Pancreas (tissue), 10 donors: ENCODE measurements at regions of chr22 and their contacts with region 1.

Region 1: DNA sequence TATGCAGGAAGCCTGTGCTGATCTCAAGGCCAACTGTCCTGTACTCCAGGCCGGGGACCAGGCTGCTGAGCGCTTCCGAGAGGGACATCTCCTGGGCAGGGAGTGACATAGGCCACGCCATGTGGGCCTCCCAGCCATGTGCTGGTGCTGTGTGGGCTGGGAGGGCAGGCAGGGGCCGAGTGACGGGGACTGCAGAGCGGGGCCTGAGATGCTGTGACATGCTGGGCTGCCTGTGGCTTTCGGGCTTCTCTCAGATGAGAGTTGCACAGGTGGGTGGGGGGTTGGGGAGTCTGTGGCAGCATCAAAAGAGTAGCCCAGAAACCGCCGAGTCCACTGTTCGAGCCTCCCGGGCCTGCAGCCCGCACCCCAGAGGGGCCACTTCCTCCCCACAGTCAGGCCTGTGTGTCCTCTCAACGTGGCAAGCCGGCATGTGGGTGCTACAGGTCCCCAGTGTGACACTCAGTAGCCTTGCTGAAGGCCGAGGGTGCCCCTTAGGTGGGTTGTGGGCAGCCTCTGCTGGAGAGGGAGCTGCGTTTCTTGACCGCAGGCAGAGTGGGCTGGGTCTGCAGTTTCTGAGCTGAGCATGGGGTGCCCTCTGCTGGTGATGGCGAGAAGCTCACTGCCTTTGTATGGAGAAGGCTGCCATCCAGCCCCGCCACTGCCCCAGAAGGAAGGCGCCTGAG is 101.2 kb downstream of the BCR start:
- DNase-seq: peak; percentile 59 to 92 (median 84)
- ATAC-seq: peak; percentile 64 to 82 (median 81)
- H3K4me3 ChIP-seq: no peak overlapping the region
- H3K27ac ChIP-seq: peak overlapping the region in 3 of 4 donors; percentile 37 to 54 (median 48)
- H3K4me1 ChIP-seq: peaks cover 0 to 11% (median 10%) of the 10 kb centered on the region in 3 donors
- H3K27me3 ChIP-seq: no peaks in the 10 kb centered on the region
- CTCF ChIP-seq: peak; percentile 79 to 93 (median 86)

Region 2: GRCh38 chr22:23156286-23156685 is 125.3 kb before region 1 on chr22:
- intact Hi-C with region 1: no loop called
- DNase-seq: no peak
- ATAC-seq: no peak
- H3K4me3 ChIP-seq: no peak overlapping the region
- H3K27ac ChIP-seq: no peak overlapping the region
- H3K4me1 ChIP-seq: no peaks in the 10 kb centered on the region
- H3K27me3 ChIP-seq: no peaks in the 10 kb centered on the region
- CTCF ChIP-seq: no peak

Region 3: DNA sequence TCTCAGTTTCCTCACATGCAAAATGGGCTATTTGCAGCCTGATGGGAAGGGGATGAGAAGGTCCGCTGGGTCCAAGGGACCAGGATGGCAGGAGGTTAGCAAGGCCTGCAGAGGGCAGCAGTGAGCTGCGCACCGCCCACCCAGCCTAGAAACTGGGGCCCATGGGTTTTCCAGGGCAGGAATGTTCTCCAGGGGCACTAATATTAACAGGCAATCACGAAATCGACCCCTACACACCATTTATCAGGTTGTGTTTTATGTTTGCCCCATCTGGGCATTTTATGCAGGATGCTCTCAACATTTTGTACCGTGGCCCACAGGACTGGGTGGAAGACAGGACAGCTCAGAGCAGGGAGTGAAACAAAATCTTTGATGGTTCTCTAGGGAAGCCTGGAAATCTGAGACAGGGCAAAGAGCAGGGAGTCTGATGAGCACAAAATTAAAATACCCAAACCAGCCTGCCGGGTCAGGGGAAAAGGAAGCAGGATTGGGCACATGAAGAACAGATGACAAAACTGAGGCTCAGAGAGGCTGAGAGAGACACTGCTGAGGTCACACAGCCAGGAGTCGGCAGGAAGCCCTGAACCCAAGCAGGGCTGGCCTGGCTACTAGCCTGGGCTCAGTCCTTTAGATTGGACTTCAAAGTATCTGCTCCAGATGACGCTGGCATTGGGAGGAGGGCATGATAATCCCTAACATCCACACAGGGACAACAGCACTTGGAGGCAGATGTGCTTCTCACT is 102.9 kb before region 1 on chr22:
- intact Hi-C with region 1: loop called (anchors 2 to 10 kb)
- DNase-seq: peak; percentile 45 to 88 (median 72)
- ATAC-seq: peak; percentile 54 to 71 (median 64)
- H3K4me3 ChIP-seq: no peak overlapping the region
- H3K27ac ChIP-seq: peak overlapping the region in 2 of 4 donors; percentile 64 to 69
- H3K4me1 ChIP-seq: peaks cover 3 to 33% (median 4%) of the 10 kb centered on the region in 3 donors
- H3K27me3 ChIP-seq: no peaks in the 10 kb centered on the region
- CTCF ChIP-seq: peak; percentile 89 to 96 (median 92)

Region 4: DNA sequence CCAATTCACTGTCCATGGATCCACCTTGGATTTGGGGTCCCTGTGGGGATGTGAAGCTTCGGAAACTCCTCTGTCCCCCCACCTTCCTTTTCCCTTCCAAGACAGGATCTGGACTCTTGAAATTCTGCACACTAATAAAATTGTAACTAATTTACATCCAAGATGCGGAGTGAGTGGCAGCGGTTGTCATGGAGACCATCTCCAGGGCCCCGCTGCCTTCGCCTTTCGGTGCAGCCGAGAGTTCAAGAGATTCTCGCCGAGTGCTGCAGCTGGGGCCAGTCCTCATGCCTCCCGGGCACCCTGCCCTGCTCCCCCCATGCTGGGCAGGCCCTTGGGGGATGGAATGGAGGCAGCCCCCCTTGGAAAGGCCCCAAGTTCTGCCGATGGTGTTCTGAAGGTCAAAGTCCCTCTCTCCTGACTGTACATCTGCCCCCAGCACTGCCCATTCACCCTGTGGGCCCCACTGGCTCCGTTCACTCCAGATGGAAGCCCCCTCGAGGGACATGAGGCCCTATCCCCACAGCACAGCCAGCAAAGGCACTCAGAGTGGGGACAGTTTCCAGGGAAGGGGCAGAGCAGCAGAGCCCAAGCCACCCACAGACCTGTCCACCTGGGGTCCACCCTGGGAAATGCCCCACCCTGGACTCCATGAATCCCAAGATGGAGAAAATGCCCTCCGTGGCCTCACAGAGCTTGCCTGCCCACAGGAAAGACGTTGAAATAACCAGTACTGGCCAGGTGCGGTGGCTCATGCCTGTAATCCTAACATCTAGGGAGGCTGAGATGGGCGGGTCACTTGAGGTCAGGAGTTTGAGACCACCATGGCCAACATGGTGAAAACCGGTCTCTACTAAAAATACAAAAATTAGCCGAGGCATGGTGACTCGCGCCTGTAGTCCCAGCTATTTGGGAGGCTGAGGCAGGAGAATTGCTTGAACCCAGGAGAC is 272.6 kb after region 1 on chr22:
- intact Hi-C with region 1: no loop called
- DNase-seq: no peak
- ATAC-seq: no peak
- H3K4me3 ChIP-seq: no peak overlapping the region
- H3K27ac ChIP-seq: no peak overlapping the region
- H3K4me1 ChIP-seq: no peaks in the 10 kb centered on the region
- H3K27me3 ChIP-seq: no peaks in the 10 kb centered on the region
- CTCF ChIP-seq: no peak